Sigmoid colon (tissue), 7 donors: ENCODE measurements at regions of chr11 and their contacts with region 1.

Region 1: DNA sequence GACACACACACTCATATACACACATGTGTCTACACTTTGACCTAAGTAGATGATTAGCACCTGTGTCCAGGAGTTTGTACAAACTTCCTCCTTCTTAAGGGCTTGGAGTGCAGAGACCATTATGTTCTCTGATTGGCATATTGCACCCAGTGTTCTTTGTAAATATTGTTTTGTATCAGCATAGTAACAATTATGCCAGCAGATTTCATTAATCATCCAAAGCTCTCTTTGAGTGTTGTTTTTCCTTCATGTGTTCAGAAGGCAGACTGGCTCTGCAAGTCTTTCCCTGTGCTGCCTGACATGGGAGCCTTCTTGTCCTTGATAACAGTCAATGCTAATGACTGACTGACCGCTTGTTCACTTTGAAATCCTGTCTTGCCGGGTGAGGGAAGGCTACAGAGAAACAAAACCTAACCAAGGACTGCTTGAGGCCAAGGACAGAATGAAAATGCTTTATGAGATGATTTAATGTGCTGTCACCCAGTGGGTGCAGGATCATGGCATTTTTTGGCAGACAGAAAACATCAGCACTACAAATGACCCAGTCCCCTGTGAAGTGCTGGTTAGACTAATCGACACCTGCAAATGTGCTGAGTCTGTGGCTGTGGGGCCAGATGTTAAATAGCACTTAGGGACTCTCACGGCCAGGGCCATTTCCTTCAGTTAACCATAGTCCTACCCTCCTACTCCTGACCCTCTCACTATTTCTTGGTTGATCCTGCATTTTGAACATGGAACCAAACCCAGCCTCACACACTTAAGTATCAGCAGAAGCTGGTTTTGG is 6.6 kb upstream of the BARX2 start:
- DNase-seq: no peak
- H3K4me3 ChIP-seq: no peak overlapping the region
- H3K27ac ChIP-seq: no peak overlapping the region
- H3K4me1 ChIP-seq: peaks cover 0 to 23% (median 18%) of the 10 kb centered on the region in 4 donors
- H3K27me3 ChIP-seq: peaks cover 16 to 98% (median 26%) of the 10 kb centered on the region in 3 donors
- CTCF ChIP-seq: no peak
- EP300 ChIP-seq: no peak
- POLR2A ChIP-seq: no peak

Region 2: DNA sequence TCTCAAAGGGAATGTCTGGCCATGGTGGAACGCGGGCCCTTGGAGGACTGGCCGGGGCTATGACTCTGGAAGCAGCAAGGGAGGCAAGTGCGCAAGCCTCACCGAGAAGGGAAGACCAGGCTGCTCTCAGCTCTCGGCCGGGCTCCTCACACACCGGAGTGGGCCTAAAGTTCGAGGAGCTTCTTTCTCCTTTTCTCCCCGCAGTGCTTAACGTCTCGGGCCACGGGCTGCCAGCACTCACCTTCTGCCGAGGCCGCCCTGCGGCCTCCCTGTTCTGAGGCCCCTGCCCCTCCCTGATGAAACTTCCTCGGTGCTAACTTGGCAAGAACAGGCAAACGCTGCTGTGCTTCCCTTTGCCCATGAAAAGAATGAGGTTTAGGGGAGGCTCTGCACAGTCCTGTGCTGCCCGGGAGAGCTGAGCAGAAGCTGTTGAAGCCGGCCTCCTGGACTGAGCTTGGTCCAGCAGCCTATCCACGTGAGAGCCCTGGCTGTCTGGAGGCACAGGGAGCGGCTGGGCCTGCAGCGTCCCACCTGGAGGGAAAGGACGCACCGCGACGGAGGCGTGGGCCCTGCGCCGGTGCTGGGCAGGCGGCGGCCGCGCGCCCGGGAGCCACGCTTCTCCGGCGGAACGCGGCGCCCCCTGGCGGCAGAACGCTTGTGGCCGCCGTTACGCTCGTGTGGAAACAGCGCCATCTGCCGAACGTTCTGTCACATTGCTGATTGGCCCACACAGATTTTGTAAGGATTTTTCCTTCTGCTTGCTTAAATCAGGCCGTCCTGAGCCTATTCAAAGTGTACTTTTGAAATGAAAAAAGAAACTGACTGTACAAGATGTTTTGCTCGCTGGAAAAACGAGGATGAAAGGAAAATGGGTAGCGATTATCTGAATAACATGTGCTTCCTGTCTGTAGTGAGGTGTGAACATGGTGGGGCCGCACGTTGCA is 381.5 kb after region 1 on chr11:
- intact Hi-C with region 1: loop called (anchors 5 kb)
- DNase-seq: peak; percentile 68
- H3K4me3 ChIP-seq: peak overlapping the region in 3 of 4 donors; percentile 30 to 40 (median 37)
- H3K27ac ChIP-seq: peak overlapping the region in 1 of 4 donors; percentile 14
- H3K4me1 ChIP-seq: peaks cover 0 to 10% (median 6%) of the 10 kb centered on the region in 4 donors
- H3K27me3 ChIP-seq: no peaks in the 10 kb centered on the region
- CTCF ChIP-seq: peak; percentile 56 to 99 (median 84)
- EP300 ChIP-seq: no peak
- POLR2A ChIP-seq: no peak